Activated T-helper 1 cell treated with anti-CD3 and anti-CD28 coated beads, Interleukin-12 subunit alpha, Interleukin-12 subunit beta, Interleukin-2, Interleukin-4 antibody, amounts not matched to agents 30 ng/mL and 10 ng/mL and 1 ng/mL, durations not matched to agents 14 hours and 24 hours and 36 hours (primary cell): ENCODE measurements at regions of chr1 and their contacts with region 1.

Region 1: DNA sequence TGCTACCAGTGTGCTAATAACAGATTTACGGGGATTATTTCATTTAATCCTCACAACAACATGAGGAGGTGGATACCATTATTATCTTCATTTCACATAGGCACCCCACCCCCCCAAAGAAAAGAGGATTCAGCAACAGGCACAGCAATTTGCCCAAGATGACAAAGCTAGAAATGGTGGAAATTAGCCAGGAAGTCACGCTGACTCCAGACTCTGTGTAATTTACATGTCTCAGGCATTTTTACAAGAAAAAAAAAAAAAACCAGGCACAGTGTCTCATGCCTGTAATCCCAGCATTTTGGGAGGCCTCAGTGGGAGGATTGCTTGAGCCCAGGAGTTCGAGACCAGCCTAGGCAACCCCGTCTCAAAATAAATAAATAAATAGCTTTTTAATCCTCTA is 37.5 kb upstream of the PRDM2 start:
- DNase-seq: no peak
- H3K4me3 Mint-ChIP-seq: no peak overlapping the region
- H3K27ac Mint-ChIP-seq: no peak overlapping the region
- H3K4me1 Mint-ChIP-seq: peaks cover 6% of the 10 kb centered on the region
- H3K27me3 Mint-ChIP-seq: peaks cover 3% of the 10 kb centered on the region

Region 2: DNA sequence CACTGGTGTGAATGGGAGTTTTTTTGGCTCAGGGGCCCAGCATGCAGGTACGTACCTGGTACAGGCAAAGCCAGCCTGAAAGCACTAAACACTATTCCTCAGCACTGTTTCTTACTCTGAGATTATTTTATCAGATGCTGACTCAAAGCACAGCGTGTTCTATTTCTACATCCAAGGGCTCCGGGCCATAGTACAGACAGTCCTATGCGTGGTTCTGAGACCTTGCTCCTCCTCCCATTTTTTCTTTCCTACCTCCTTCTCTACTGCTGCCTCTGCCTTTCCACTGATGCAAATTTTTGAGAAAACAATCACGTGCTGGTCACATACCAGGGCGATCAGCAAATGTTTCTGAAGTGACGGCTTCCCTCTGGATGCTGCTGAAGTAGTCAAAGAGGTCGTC is 42.6 kb before region 1 on chr1:
- intact Hi-C with region 1: no loop called
- DNase-seq: no peak
- H3K4me3 Mint-ChIP-seq: no peak overlapping the region
- H3K27ac Mint-ChIP-seq: no peak overlapping the region
- H3K4me1 Mint-ChIP-seq: no peaks in the 10 kb centered on the region
- H3K27me3 Mint-ChIP-seq: peaks cover 1% of the 10 kb centered on the region

Region 3: GRCh38 chr1:13651279-13651678 is 11.2 kb before region 1 on chr1:
- intact Hi-C with region 1: no loop called
- DNase-seq: no peak
- H3K4me3 Mint-ChIP-seq: no peak overlapping the region
- H3K27ac Mint-ChIP-seq: no peak overlapping the region
- H3K4me1 Mint-ChIP-seq: no peaks in the 10 kb centered on the region
- H3K27me3 Mint-ChIP-seq: peaks cover 2% of the 10 kb centered on the region

Region 4: GRCh38 chr1:13725714-13726175 is 63.3 kb after region 1 on chr1:
- intact Hi-C with region 1: loop called (anchors 1 kb)
- DNase-seq: no peak
- H3K4me3 Mint-ChIP-seq: no peak overlapping the region
- H3K27ac Mint-ChIP-seq: no peak overlapping the region
- H3K4me1 Mint-ChIP-seq: peaks cover 37% of the 10 kb centered on the region
- H3K27me3 Mint-ChIP-seq: no peaks in the 10 kb centered on the region

Region 5: DNA sequence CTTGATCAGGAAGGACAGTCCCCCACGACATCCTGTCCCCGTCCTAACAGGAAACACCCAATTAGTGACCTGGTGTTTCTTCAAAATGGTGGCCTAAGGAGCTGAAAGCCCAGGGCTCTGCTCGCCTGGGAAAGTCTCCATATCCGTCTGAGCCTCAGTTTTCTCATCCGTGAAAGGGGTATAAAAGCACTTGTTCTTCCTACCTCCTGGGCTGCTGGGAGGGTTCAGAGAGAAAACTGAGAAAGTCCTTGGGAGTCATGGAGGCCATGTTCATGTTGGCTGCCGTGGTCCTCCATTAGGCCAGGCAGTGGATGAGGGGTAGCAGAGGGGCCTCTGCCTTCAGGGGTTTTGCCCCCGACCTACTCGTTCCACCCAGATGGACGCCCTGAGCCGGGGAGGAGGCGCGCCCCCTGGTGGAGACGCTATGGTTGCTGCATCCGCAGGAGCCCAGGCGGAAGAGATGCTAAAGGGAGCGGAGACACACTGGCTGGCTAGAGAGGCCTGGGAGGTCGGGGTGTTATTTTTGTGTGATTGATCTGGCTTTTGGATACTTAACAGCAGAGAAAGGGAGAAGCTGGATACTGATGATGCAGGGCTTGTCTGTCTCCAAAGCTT is 151.0 kb after region 1 on chr1:
- intact Hi-C with region 1: loop called (anchors 1 kb)
- DNase-seq: peak; percentile 24
- H3K4me3 Mint-ChIP-seq: no peak overlapping the region
- H3K27ac Mint-ChIP-seq: peak overlapping the region; percentile 2
- H3K4me1 Mint-ChIP-seq: no peaks in the 10 kb centered on the region
- H3K27me3 Mint-ChIP-seq: no peaks in the 10 kb centered on the region